ENCODE measurements at regions of chr3 and their contacts with region 1.

Region 1: DNA sequence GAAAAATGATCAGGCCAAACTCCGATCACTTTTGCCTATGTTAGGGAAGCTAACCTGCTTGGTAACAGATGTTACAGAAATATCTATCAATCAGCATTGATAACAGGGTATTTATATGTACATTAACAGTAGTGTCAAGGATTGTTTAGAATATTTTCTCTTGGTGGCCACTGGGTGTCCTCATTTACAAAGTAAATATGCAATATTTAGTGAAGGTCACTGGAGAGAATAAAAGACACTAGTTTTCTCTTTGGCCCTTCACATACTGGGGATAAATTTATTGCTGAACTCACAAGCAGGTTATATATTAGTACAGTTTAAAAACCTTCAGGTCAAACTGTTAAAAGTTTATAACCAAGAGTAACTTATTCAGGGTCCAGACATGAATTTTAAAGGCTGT is 69.0 kb downstream of the TIGIT start:
- DNase-seq: no peak
- H3K4me3 Mint-ChIP-seq: no peak overlapping the region
- H3K27ac Mint-ChIP-seq: no peak overlapping the region
- H3K4me1 Mint-ChIP-seq: peaks cover 14% of the 10 kb centered on the region
- H3K27me3 Mint-ChIP-seq: no peaks in the 10 kb centered on the region

Region 2: DNA sequence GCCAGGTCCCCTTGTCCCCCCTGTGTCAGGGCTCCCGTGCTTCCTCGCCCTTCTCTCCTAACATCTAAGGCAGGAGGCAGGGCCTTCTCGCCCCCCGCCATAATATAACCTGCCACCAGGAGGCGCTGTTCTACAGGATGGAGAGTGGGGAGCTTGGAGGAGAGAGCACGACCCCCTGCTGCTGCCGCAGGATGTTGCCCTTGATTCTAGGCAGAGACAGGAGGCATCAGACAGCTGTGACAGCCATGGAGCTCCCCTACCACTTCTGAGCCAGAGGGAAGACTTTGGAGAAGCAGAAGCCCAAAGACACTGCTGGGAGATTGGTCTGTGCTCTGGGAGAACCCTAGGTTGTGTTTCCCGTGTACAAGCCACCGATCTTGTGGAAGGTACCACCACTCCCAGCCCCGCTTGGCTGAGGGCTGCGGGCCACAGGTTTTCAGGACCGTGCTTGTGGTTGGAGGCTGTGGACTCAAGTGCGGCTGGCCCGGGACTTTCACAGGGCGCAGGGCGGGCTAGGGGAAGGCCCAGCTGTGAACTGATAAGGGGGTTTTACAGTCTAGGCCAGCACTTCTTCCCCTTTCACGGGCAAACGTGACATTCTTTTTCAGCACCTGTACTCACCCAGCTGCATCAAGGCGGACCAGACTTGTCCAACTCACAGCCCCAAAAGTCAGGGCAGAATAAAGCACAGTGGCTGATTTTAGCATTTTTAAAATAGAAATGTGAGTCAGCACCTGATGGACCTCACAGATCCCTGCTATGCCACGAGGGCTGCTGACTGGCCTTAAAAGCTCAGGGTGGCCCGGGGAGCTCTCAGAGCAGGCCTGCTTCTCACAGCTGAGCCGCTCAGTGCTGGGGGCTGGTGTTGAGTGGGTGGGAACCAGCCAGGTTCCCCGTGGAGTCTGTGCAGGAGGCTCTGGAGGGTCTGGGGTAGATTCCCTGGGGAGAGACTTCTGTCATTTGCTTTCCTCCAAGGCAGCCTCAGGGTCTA is 71.6 kb before region 1 on chr3:
- intact Hi-C with region 1: loop called (anchors 5 kb)
- DNase-seq: peak; percentile 69
- H3K4me3 Mint-ChIP-seq: peak overlapping the region; percentile 13
- H3K27ac Mint-ChIP-seq: peak overlapping the region; percentile 84
- H3K4me1 Mint-ChIP-seq: peaks cover 31% of the 10 kb centered on the region
- H3K27me3 Mint-ChIP-seq: no peaks in the 10 kb centered on the region

Region 3: DNA sequence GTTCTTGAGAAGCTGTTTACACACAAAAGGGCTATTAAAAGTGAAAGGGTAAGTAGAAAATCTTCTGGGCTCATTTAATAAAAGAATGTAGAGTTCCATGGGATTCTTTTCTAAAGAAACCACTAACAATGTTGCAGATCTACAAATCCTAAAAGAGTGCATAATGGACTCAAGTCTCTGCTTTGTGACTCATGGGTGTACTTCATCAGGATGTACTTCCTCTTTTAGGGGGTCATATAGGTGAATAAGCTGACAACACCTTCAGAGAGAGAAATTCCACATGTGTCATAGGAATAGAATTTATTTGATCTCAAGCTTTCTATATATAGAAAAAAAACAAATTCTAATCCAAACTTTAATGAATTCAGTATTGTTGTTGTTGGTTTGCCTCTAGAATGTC is 286.5 kb after region 1 on chr3:
- intact Hi-C with region 1: no loop called
- DNase-seq: no peak
- H3K4me3 Mint-ChIP-seq: no peak overlapping the region
- H3K27ac Mint-ChIP-seq: no peak overlapping the region
- H3K4me1 Mint-ChIP-seq: no peaks in the 10 kb centered on the region
- H3K27me3 Mint-ChIP-seq: no peaks in the 10 kb centered on the region